ENCODE measurements at regions of chr3 and their contacts with region 1.

Region 1: GRCh38 chr3:122365073-122365472 is 18.0 kb downstream of the MIX23 start:
- DNase-seq: no peak
- H3K4me3 Mint-ChIP-seq: peak overlapping the region; percentile 42
- H3K27ac Mint-ChIP-seq: peak overlapping the region; percentile 91
- H3K4me1 Mint-ChIP-seq: peaks cover 47% of the 10 kb centered on the region
- H3K27me3 Mint-ChIP-seq: no peaks in the 10 kb centered on the region

Region 2: GRCh38 chr3:122299872-122300460 is 65.1 kb before region 1 on chr3:
- intact Hi-C with region 1: loop called (anchors 1 kb)
- DNase-seq: no peak
- H3K4me3 Mint-ChIP-seq: no peak overlapping the region
- H3K27ac Mint-ChIP-seq: no peak overlapping the region
- H3K4me1 Mint-ChIP-seq: peaks cover 28% of the 10 kb centered on the region
- H3K27me3 Mint-ChIP-seq: no peaks in the 10 kb centered on the region

Region 3: GRCh38 chr3:122322095-122323075 is 42.7 kb before region 1 on chr3:
- intact Hi-C with region 1: loop called (anchors 1 kb)
- DNase-seq: peak; percentile 60
- H3K4me3 Mint-ChIP-seq: no peak overlapping the region
- H3K27ac Mint-ChIP-seq: peak overlapping the region; percentile 57
- H3K4me1 Mint-ChIP-seq: peaks cover 40% of the 10 kb centered on the region
- H3K27me3 Mint-ChIP-seq: peaks cover 13% of the 10 kb centered on the region

Region 4: DNA sequence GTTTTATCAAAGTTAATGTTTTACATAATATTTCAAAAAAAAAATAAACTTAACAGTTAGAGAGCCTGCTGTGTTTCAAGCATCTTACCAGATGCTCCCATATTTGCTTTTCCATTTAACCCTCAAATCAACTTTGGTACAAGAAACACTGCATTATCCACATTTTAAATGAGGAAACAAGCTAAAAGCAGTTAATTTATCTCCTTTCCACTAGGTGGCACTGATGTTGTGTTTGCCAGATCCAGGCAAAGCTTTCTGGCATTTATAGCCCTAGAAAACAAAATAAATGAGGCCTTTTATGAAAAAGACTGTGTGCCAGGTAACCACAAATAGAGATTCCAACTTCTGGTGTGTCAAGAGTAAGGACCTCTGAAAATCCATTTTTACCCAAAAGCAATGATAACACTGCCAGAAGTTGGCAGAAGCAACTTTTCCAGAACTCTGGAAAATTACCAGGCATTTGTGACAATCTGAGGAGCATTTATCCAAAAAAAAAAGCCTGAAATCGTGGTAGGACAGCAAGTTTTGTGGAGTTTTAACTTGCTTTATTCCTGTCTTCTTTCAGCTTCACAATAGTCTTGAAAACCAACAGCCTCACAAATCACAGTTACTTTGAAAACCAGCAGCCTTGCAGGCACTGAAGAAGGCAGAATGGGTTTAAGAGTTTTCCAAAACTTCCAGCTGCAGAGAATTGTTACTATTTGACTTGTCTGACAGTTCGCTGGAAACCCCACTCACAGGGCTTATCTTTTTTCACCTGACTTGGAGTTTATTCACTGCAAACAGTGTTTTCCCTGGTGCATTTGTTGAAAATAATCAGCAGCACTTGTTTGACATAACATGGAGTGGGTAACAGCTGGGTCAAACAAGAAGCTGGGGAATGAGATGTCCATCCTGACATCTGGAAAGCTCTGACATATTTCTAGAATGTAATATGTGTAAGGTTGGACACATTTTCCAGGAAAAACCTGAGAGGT is 28.1 kb after region 1 on chr3:
- intact Hi-C with region 1: no loop called
- DNase-seq: no peak
- H3K4me3 Mint-ChIP-seq: no peak overlapping the region
- H3K27ac Mint-ChIP-seq: no peak overlapping the region
- H3K4me1 Mint-ChIP-seq: peaks cover 46% of the 10 kb centered on the region
- H3K27me3 Mint-ChIP-seq: no peaks in the 10 kb centered on the region

Region 5: GRCh38 chr3:122427857-122428471 is 62.9 kb after region 1 on chr3:
- intact Hi-C with region 1: loop called (anchors 1 kb)
- DNase-seq: no peak
- H3K4me3 Mint-ChIP-seq: no peak overlapping the region
- H3K27ac Mint-ChIP-seq: peak overlapping the region; percentile 61
- H3K4me1 Mint-ChIP-seq: peaks cover 18% of the 10 kb centered on the region
- H3K27me3 Mint-ChIP-seq: no peaks in the 10 kb centered on the region

Measured in activated T-helper 1 cell treated with anti-CD3 and anti-CD28 coated beads, Interleukin-12 subunit alpha, Interleukin-12 subunit beta, Interleukin-2, Interleukin-4 antibody, amounts not matched to agents 30 ng/mL and 10 ng/mL and 1 ng/mL, durations not matched to agents 14 hours and 24 hours and 36 hours (primary cell).